ENCODE measurements at regions of chr9 and their contacts with region 1.

Region 1: GRCh38 chr9:122888480-122888879 is 16.7 kb downstream of the RC3H2 start:
- H3K4me3 Mint-ChIP-seq: no peak overlapping the region
- H3K27ac Mint-ChIP-seq: no peak overlapping the region
- H3K4me1 Mint-ChIP-seq: no peaks in the 10 kb centered on the region
- H3K27me3 Mint-ChIP-seq: no peaks in the 10 kb centered on the region

Region 2: GRCh38 chr9:122991370-122991830 is 102.9 kb after region 1 on chr9:
- intact Hi-C with region 1: loop called (anchors 5 kb)
- H3K4me3 Mint-ChIP-seq: no peak overlapping the region
- H3K27ac Mint-ChIP-seq: no peak overlapping the region
- H3K4me1 Mint-ChIP-seq: no peaks in the 10 kb centered on the region
- H3K27me3 Mint-ChIP-seq: no peaks in the 10 kb centered on the region